GM12878 (cell line): ENCODE measurements at regions of chr14 and their contacts with region 1.

Region 1: DNA sequence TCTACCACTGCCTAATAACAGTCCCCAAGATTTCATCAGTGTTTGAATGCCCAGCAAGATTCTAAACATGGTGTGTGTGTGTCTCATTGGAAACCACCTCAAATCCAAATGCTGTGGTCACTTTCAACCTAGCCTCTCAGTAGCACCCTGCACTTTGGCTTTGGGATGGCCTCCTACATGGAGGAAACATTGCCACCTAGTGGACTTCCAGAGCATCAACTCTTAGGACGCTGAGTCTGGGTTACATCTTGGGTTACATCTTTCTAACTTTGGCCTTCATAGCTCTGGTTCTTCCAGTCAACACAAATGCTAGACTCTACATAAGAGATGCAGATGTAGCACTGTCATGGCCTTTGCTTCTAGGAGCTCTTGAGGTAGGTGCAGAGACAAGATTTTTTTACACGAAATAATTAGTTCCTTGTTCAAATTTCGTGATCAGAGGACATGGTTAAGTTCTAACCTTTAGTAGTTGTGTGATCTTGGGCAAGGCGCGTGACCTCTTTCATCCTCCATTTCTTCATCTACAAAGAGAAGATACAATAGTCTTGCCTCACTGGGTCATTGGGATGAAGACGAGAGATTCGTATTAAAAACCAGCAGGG is 113.5 kb upstream of the VASH1 start:
- DNase-seq: no peak
- ATAC-seq: peak; percentile 94
- H3K4me3 ChIP-seq: no peak overlapping the region
- H3K27ac ChIP-seq: no peak overlapping the region
- H3K4me1 ChIP-seq: no peaks in the 10 kb centered on the region
- H3K27me3 ChIP-seq: no peaks in the 10 kb centered on the region
- CTCF ChIP-seq: peak; percentile 75 to 88 (median 87)
- EP300 ChIP-seq: no peak
- POLR2A ChIP-seq: no peak
- RAD21 ChIP-seq: peak; percentile 71

Region 2: DNA sequence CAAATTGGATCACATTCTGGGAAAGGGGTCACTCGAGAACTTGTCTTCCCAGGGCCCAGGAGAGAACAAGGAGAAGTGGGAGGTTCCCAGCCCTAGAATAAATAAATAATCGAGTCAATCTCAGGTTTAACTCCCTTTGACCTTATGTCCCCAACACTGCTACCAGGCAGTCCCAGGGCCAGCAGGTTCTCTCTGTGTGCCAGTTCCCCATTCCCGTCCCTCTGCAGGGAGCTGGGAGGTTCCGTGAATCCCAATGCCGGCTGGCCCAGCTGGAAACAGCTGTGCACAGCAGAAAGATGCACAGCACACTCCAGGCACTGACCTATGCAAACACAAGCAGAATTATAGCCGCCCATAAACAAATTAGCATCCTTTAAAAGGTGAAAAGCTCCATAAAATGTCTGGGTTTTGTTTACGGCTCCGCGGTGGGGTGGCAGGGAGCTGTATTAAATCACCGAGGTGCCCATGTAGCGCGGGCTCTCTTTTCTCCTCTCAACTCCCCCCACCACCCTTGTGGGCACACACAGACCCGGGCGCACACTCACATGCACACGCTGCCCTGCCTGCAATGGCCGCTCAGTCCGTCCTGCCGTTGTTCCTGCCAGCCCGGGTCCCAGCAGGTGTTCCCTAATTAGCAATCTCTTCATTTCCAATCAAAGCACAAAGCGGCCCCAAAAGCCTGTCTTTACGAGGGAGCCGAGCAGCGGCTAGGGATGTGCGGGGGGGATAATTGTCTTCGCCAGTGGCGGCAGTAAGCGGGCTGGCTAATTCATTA is 318.5 kb before region 1 on chr14:
- CTCF ChIA-PET with region 1: no interaction called
- POLR2A ChIA-PET with region 1: no interaction called
- RAD21 ChIA-PET with region 1: no interaction called
- SMC1A ChIA-PET with region 1: no interaction called
- in situ Hi-C with region 1: no loop called
- intact Hi-C with region 1: no loop called
- DNase-seq: no peak
- ATAC-seq: no peak; the same call in 2 of the 3 replicates
- H3K4me3 ChIP-seq: no peak overlapping the region
- H3K27ac ChIP-seq: no peak overlapping the region
- H3K4me1 ChIP-seq: no peaks in the 10 kb centered on the region
- H3K27me3 ChIP-seq: peaks cover 0 to 10% of the 10 kb centered on the region in 2 experiments
- CTCF ChIP-seq: no peak
- EP300 ChIP-seq: no peak
- POLR2A ChIP-seq: no peak
- RAD21 ChIP-seq: no peak

Region 3: GRCh38 chr14:76386915-76387782 is 260.6 kb before region 1 on chr14:
- CTCF ChIA-PET with region 1: interaction called, 4 read pairs
- POLR2A ChIA-PET with region 1: no interaction called
- RAD21 ChIA-PET with region 1: interaction called, 5 read pairs
- SMC1A ChIA-PET with region 1: interaction called, 4 read pairs
- in situ Hi-C with region 1: no loop called
- intact Hi-C with region 1: loop called (anchors 10 kb)
- DNase-seq: peak; percentile 7
- ATAC-seq: peak; percentile 99
- H3K4me3 ChIP-seq: no peak overlapping the region
- H3K27ac ChIP-seq: no peak overlapping the region
- H3K4me1 ChIP-seq: no peaks in the 10 kb centered on the region
- H3K27me3 ChIP-seq: no peaks in the 10 kb centered on the region
- CTCF ChIP-seq: peak; percentile 99
- EP300 ChIP-seq: no peak
- POLR2A ChIP-seq: no peak
- RAD21 ChIP-seq: peak; percentile 98

Region 4: DNA sequence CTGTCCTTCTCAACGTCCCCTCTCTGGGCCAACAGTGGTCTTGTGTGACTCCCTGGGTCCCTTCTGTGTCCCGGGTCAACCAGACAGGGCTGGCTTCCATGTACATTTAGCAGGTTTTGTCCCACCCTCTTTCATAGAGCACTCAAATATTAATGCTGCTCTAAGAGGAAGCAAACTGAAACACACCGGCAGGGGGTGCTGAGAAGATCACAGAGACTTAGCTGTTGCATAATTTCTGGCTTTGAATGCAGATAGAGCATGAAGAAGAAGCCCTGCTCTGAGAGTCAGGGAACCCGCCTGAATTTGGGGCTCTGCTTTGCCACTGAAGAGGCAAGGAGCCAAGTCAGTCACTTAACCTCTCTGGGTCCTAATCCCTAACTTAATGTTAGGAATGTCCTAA is 133.2 kb before region 1 on chr14:
- CTCF ChIA-PET with region 1: interaction called, 13 read pairs
- POLR2A ChIA-PET with region 1: no interaction called
- RAD21 ChIA-PET with region 1: interaction called, 3 read pairs
- SMC1A ChIA-PET with region 1: interaction called, 4 read pairs
- in situ Hi-C with region 1: no loop called
- intact Hi-C with region 1: loop called (anchors 2 kb)
- DNase-seq: no peak
- ATAC-seq: peak; percentile 67
- H3K4me3 ChIP-seq: no peak overlapping the region
- H3K27ac ChIP-seq: no peak overlapping the region
- H3K4me1 ChIP-seq: no peaks in the 10 kb centered on the region
- H3K27me3 ChIP-seq: peaks cover 0 to 2% of the 10 kb centered on the region in 2 experiments; a peak in 2 of 4 replicates
- CTCF ChIP-seq: peak; percentile 24 to 48 (median 27); a peak in 4 of 6 replicates
- EP300 ChIP-seq: no peak
- POLR2A ChIP-seq: no peak
- RAD21 ChIP-seq: peak; percentile 48

Region 5: GRCh38 chr14:76607510-76607909 is 40.3 kb before region 1 on chr14:
- CTCF ChIA-PET with region 1: no interaction called
- POLR2A ChIA-PET with region 1: no interaction called
- RAD21 ChIA-PET with region 1: no interaction called
- SMC1A ChIA-PET with region 1: no interaction called
- in situ Hi-C with region 1: no loop called
- intact Hi-C with region 1: no loop called
- DNase-seq: no peak
- ATAC-seq: no peak
- H3K4me3 ChIP-seq: no peak overlapping the region
- H3K27ac ChIP-seq: no peak overlapping the region
- H3K4me1 ChIP-seq: no peaks in the 10 kb centered on the region
- H3K27me3 ChIP-seq: peaks cover 3% of the 10 kb centered on the region in 2 experiments; a peak in 2 of 4 replicates
- CTCF ChIP-seq: no peak
- EP300 ChIP-seq: no peak
- POLR2A ChIP-seq: no peak
- RAD21 ChIP-seq: no peak

Region 6: GRCh38 chr14:76968621-76969063 is 320.8 kb after region 1 on chr14:
- CTCF ChIA-PET with region 1: no interaction called
- POLR2A ChIA-PET with region 1: no interaction called
- RAD21 ChIA-PET with region 1: no interaction called
- SMC1A ChIA-PET with region 1: no interaction called
- in situ Hi-C with region 1: no loop called
- intact Hi-C with region 1: no loop called
- DNase-seq: no peak
- ATAC-seq: no peak
- H3K4me3 ChIP-seq: no peak overlapping the region
- H3K27ac ChIP-seq: no peak overlapping the region
- H3K4me1 ChIP-seq: peaks cover 21% of the 10 kb centered on the region
- H3K27me3 ChIP-seq: no peaks in the 10 kb centered on the region
- CTCF ChIP-seq: no peak
- EP300 ChIP-seq: no peak
- POLR2A ChIP-seq: no peak; the same call in 1 of the 2 replicates
- RAD21 ChIP-seq: no peak